ENCODE measurements at regions of chr20 and their contacts with region 1.

Region 1: DNA sequence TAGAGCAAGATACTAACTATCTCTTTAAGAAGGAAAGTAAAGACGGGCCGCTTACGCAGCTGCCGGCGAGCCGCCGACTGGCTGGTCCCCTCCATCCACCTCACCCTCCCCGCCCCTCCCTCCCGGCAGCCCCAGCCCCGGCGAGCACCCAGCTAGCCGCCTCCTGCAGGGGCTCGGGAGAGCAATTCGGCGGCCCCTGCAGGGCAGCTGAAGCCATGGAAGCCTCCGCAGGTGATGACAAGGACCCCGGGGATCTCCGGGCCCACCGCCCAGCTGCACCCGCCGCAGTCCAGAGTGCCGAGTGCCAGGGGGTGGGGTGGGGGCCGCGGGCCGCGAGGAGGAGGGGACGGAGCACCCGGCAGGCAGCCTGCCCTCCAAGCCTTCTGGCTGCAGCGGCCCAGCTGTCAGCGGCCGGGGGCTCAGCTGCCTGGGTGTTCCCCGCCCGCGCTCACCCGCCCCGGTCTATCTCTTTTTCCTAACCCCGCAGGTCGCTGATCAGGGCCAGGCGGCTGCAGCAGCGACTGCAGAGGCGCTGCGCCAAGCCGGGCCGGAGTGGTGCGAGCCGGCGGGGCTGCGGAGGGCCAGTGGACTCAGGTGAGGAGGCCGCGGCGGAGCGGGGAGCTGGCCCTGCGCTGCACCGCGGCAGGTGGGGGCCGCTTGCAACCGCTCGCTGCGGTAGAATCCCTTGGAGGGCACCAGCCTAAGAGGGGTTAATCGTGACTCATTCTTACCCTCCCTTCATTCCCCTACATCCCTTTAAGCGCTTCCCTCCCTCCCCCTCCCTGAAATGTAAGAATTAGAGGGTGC is at the start of gene SNPH:
- DNase-seq: peak; percentile 51 to 89 (median 79)
- ATAC-seq: peak; percentile 85
- H3K4me3 ChIP-seq: peak within 1 kb of the TSS; percentile 51 to 56
- H3K4me3 Mint-ChIP-seq: peak within 1 kb of the TSS; percentile 86
- H3K27ac ChIP-seq: peak within 1 kb of the TSS; percentile 43 to 80
- H3K27ac Mint-ChIP-seq: peak within 1 kb of the TSS; percentile 95
- H3K4me1 ChIP-seq: peaks cover 52% of the 10 kb centered on the region
- H3K4me1 Mint-ChIP-seq: peaks cover 75% of the 10 kb centered on the region
- H3K27me3 ChIP-seq: no peaks in the 10 kb centered on the region
- H3K27me3 Mint-ChIP-seq: no peaks in the 10 kb centered on the region
- CTCF ChIP-seq: no peak
- total RNA-seq, gene SNPH: 13.6 to 14.4 TPM

Region 2: DNA sequence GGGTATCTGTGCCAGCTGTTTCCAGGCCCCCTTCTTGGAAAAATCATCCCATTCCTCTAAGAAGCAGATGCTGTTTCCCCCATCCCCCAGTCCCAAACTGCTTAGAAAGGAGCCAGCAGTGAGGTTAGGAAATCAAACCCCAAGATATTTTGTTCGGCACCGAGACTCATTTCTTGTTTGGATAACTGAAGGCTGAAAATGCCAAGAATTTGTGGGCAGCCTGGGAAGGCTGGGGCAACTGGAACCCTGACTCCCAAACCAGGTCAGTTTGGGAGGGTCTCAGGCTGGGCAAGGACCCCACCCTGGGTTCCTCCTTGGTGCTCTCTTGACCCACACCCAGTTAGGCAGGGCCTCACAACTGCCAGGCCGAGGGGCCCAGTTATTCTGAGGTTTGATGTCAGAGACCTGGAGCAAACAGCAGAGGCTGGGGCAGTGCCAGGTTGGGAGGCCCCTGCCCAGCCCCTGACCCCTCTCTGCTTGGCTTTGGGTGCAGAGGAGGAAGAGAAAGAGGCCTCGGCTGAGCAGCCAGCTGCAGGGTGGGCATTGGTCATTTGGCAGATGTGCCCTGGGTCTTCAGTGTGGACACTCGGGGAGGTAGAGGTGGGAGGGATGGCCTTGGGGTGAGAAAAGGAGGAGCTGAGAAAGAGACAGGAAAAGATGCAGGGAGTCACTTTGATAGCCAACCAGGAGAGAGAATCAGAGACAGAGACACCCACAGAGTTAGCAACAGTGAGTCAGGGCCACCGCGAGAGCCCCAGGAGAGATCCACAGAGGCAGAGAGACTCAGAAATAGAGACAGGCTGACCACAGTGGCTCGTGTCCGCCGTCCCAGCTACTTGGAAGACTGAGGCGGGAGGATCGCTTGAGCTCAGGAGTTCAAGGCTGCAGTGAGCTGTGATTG is 355.2 kb before region 1 on chr20:
- CTCF ChIA-PET with region 1: no interaction called
- POLR2A ChIA-PET with region 1: no interaction called
- intact Hi-C with region 1: no loop called
- DNase-seq: no peak
- ATAC-seq: no peak
- H3K4me3 ChIP-seq: no peak overlapping the region
- H3K4me3 Mint-ChIP-seq: no peak overlapping the region
- H3K27ac ChIP-seq: no peak overlapping the region
- H3K27ac Mint-ChIP-seq: no peak overlapping the region
- H3K4me1 ChIP-seq: no peaks in the 10 kb centered on the region
- H3K4me1 Mint-ChIP-seq: no peaks in the 10 kb centered on the region
- H3K27me3 ChIP-seq: no peaks in the 10 kb centered on the region
- H3K27me3 Mint-ChIP-seq: peaks cover 13% of the 10 kb centered on the region
- CTCF ChIP-seq: no peak

Region 3: DNA sequence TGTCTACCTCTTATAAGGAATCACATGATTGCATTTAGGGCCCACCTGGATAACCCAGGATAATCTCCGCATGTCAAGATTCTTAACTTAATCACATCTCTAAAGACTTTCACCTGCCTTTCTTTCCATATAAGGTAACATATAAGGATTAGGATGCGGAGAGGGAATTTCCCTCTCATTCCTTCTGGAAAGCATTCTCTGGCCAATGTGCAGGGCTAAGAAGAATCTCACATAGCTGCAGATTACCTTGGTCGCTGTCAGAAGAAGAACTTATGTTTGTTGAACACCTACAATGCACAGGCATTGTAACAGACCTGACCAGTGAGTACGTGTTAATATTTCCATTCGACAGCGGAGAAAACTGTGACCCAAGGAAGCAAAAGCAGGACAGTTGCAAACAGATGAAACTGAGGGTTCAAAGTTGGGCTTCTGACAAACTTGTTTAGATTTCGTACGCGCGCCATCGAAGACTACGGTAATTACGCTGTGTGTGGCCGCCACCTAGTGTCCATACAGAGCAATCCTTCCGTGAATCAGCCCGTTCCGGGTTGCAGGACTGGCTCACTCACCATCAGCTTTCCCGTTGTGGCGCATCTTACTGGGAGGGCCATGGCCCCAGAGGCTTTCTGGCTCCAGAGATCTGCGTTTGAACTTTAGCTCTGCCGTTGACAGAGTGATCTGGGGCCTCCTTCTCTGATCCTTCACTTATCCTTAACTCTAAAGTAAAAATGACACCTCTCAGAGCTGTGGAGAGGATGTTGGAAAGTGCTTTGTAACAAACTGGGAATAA is 53.6 kb before region 1 on chr20:
- CTCF ChIA-PET with region 1: no interaction called
- POLR2A ChIA-PET with region 1: no interaction called
- intact Hi-C with region 1: loop called in 1 of 2 experiments (anchors 1 kb)
- DNase-seq: peak; percentile 26 to 80 (median 68)
- ATAC-seq: peak; percentile 93
- H3K4me3 ChIP-seq: no peak overlapping the region
- H3K4me3 Mint-ChIP-seq: no peak overlapping the region
- H3K27ac ChIP-seq: no peak overlapping the region
- H3K27ac Mint-ChIP-seq: no peak overlapping the region
- H3K4me1 ChIP-seq: peaks cover 24% of the 10 kb centered on the region
- H3K4me1 Mint-ChIP-seq: peaks cover 34% of the 10 kb centered on the region
- H3K27me3 ChIP-seq: no peaks in the 10 kb centered on the region
- H3K27me3 Mint-ChIP-seq: peaks cover 8% of the 10 kb centered on the region
- CTCF ChIP-seq: peak; percentile 88

Region 4: DNA sequence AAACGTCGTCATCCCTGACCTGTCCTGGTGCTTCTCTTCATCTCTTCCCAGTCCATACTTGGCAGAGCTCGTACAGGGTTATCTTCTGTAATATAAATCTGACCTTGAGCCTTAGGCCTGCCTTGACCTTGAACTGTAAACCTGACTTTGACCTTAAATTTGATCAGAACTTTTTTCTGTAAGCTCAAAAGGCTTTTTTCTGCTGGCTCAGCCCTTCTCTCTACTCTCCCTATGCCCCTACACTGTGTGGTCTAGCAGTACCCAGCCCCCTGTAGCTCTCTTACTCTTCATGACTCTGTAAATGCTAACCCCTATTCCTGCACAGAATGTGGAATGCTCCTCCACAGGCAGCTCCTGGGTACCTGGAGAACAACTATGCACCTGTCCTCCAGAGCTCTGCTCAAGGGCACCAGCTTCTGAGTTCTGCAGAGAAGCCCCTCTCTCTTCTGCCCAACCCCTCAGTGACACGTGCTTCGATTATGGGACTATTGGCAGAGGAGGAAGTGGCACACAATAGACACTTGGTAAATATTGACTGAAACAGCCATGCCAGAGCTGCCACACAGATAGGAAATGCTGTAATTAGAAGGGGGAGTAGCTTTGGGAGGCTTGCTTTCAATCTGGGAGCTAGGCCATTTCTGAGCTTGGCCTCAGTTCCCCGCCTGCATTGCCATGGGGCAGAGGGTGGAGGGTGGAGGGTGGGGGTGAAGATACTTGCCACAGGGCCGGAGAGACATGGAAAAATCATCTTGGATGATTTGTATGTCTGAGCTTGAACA is 15.1 kb after region 1 on chr20:
- CTCF ChIA-PET with region 1: interaction called, 10 read pairs
- POLR2A ChIA-PET with region 1: interaction called, 18 read pairs
- intact Hi-C with region 1: no loop called
- DNase-seq: peak in 1 of 9 experiments; percentile 6
- ATAC-seq: peak; percentile 38
- H3K4me3 ChIP-seq: no peak overlapping the region
- H3K4me3 Mint-ChIP-seq: peak overlapping the region; percentile 40
- H3K27ac ChIP-seq: peak overlapping the region in 1 of 2 experiments; percentile 31
- H3K27ac Mint-ChIP-seq: peak overlapping the region; percentile 72
- H3K4me1 ChIP-seq: peaks cover 64% of the 10 kb centered on the region
- H3K4me1 Mint-ChIP-seq: peaks cover 63% of the 10 kb centered on the region
- H3K27me3 ChIP-seq: no peaks in the 10 kb centered on the region
- H3K27me3 Mint-ChIP-seq: no peaks in the 10 kb centered on the region
- CTCF ChIP-seq: no peak

Region 5: GRCh38 chr20:1313236-1313964 is 47.0 kb after region 1 on chr20:
- CTCF ChIA-PET with region 1: no interaction called
- POLR2A ChIA-PET with region 1: no interaction called
- intact Hi-C with region 1: loop called in 1 of 2 experiments (anchors 1 kb)
- DNase-seq: peak; percentile 20 to 83 (median 69)
- ATAC-seq: peak; percentile 82
- H3K4me3 ChIP-seq: no peak overlapping the region
- H3K4me3 Mint-ChIP-seq: no peak overlapping the region
- H3K27ac ChIP-seq: no peak overlapping the region
- H3K27ac Mint-ChIP-seq: no peak overlapping the region
- H3K4me1 ChIP-seq: peaks cover 6% of the 10 kb centered on the region
- H3K4me1 Mint-ChIP-seq: peaks cover 8% of the 10 kb centered on the region
- H3K27me3 ChIP-seq: no peaks in the 10 kb centered on the region
- H3K27me3 Mint-ChIP-seq: no peaks in the 10 kb centered on the region
- CTCF ChIP-seq: peak; percentile 99

Region 6: DNA sequence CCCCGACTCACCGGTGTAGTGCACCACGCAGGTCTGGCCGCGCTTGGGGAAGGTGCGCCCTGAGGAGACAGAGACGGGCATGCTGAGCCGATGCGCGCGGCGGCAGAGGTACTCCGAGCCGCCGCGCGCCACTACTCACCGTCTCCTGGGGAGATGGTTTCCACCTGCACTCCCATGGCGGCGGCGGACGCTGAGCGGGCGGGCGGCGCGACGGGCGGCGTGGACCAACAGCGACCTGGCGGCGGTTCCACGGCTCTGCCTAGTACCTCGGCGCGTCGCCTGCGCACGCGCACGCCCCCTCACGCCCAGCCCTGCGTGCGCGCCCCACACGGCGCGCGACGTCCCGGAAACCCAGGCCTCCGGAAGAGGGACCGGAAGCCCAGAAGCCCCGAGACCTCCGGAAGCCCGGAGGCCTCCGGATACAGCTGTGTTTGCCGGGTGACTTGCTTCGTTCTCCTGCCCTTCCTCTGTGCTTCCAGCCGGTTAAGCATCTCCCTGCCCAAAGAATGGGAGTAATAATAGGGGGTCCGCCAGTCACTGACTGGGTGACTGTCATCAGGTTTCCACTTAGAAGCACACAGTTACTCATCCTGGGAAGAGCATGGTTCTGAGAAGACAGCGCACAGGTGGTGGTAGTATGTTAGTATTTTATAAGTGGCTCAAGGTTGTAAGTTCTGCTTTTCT is 126.6 kb after region 1 on chr20 and contains the start of gene FKBP1A:
- CTCF ChIA-PET with region 1: no interaction called
- POLR2A ChIA-PET with region 1: no interaction called
- intact Hi-C with region 1: loop called in 1 of 2 experiments (anchors 1 kb)
- DNase-seq: peak; percentile 85 to 97 (median 92)
- ATAC-seq: peak; percentile 84
- H3K4me3 ChIP-seq: peak within 1 kb of the TSS; percentile 62 to 73
- H3K4me3 Mint-ChIP-seq: peak within 1 kb of the TSS; percentile 94
- H3K27ac ChIP-seq: peak within 1 kb of the TSS; percentile 58 to 68
- H3K27ac Mint-ChIP-seq: peak within 1 kb of the TSS; percentile 96
- H3K4me1 ChIP-seq: peaks cover 47% of the 10 kb centered on the region
- H3K4me1 Mint-ChIP-seq: peaks cover 53% of the 10 kb centered on the region
- H3K27me3 ChIP-seq: no peaks in the 10 kb centered on the region
- H3K27me3 Mint-ChIP-seq: no peaks in the 10 kb centered on the region
- CTCF ChIP-seq: no peak
- total RNA-seq, gene FKBP1A: 34.0 to 36.8 TPM